ENCODE measurements at regions of chr3 and their contacts with region 1.

Region 1: GRCh38 chr3:136861890-136862616 is at the start of gene NCK1:
- DNase-seq: peak; percentile 93
- ATAC-seq: peak; percentile 98
- H3K4me3 ChIP-seq: peak within 1 kb of the TSS; percentile 94
- H3K27ac ChIP-seq: peak within 1 kb of the TSS; percentile 76
- H3K4me1 ChIP-seq: peaks cover 14% of the 10 kb centered on the region
- H3K27me3 ChIP-seq: no peaks in the 10 kb centered on the region
- CTCF ChIP-seq: 0 out of 2 replicates have a peak, but pooled peaks have one; percentile 12
- total RNA-seq, gene NCK1: 15.3 and 16.5 TPM in 2 replicates

Region 2: DNA sequence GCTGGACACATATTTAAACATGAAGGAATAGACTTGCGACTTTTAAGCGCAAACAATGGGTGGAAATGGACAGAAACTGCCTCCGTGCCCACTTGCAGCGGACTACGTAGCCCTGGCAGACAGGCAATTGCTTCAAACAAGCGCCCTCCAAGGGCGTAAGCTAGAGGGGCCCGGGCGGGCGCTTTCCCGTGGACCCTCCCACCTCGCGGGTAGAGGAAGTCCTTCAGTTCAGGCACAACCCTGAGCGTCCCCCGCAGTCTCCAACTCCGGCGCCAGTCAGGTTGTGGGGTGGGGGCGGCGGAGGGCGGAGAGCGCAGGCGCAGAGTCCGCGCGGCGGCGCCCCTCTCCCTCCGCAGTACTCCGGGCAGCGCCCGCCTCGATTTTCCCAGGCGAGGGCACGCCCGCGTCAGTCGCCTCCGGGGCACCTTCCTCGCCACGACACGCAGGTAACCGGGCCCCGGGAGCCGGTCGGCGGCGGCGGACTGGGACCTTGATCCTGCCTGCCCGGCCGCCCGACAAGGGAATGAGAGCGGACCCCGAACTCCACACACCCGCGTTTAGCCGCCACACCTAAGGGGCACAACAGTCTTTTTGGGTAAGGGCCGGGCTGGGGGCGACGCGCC is 43.2 kb before region 1 on chr3 and contains the start of gene SLC35G2:
- CTCF ChIA-PET with region 1: no interaction called
- POLR2A ChIA-PET with region 1: no interaction called
- intact Hi-C with region 1: loop called (anchors 1 kb)
- DNase-seq: no peak
- ATAC-seq: peak; percentile 42
- H3K4me3 ChIP-seq: peak within 1 kb of the TSS; percentile 70
- H3K27ac ChIP-seq: peak within 1 kb of the TSS; percentile 36
- H3K4me1 ChIP-seq: peaks cover 6% of the 10 kb centered on the region; the same call in 1 of the 2 replicates
- H3K27me3 ChIP-seq: no peaks in the 10 kb centered on the region
- CTCF ChIP-seq: no peak
- total RNA-seq, gene SLC35G2: 1.8 and 3.7 TPM in 2 replicates

Region 3: GRCh38 chr3:136994772-136995516 is 132.9 kb after region 1 on chr3:
- CTCF ChIA-PET with region 1: no interaction called
- POLR2A ChIA-PET with region 1: no interaction called
- intact Hi-C with region 1: no loop called
- DNase-seq: peak; percentile 79
- ATAC-seq: peak; percentile 22
- H3K4me3 ChIP-seq: no peak overlapping the region
- H3K27ac ChIP-seq: 0 out of 2 replicates have a peak overlapping the region, but pooled peaks have one; percentile 23
- H3K4me1 ChIP-seq: peaks cover 12% of the 10 kb centered on the region
- H3K27me3 ChIP-seq: no peaks in the 10 kb centered on the region
- CTCF ChIP-seq: no peak

Measured in PC-3 (cell line).